ENCODE measurements at regions of chr9 and their contacts with region 1.

Region 1: GRCh38 chr9:116572095-116572748 is 114.9 kb upstream of the TRIM32 start:
- DNase-seq: no peak
- H3K4me3 ChIP-seq: no peak overlapping the region
- CTCF ChIP-seq: peak; percentile 98

Region 2: GRCh38 chr9:116015855-116016254 is 556.4 kb before region 1 on chr9:
- CTCF ChIA-PET with region 1: no interaction called
- POLR2A ChIA-PET with region 1: no interaction called
- DNase-seq: no peak
- H3K4me3 ChIP-seq: no peak overlapping the region
- CTCF ChIP-seq: no peak

Region 3: DNA sequence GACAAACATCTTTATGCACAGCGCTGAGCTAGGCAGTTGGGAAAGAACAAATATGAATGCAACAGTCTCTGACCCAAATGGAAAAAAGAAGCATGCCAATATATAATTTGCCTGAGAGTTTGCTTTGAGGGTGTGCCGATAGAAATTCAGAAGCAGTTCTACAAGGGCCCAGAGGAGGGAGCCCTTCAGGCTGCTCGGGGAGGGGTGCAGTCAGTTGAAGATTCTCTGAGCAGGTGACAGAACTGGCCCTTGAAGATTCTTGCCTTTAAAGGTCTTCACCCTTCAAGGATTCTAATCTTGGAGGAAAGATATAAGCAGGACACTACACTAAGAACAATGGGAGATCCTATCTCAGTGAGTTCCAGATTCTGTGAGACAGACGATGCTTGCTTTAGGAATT is 422.4 kb before region 1 on chr9:
- CTCF ChIA-PET with region 1: interaction called, 13 read pairs
- POLR2A ChIA-PET with region 1: no interaction called
- DNase-seq: no peak
- H3K4me3 ChIP-seq: no peak overlapping the region
- CTCF ChIP-seq: peak; percentile 39

Region 4: DNA sequence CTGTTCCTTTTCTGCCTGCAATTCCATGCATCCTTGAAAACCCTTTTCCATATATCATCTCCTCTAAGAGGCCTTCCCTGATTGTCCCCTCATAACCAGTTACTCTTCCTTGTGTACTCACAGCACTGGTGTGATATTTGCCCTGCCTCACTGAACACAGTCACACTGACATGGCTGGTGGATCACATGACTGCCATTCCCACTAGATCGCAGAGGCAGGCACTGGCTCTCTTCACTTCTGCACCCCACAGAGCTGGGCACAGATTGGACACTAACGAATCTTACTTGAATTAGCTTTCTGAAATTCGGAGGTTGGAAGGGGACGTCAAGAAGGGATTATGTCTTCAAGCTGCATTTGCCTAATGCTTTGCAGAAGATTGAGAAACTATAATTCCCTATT is 210.7 kb before region 1 on chr9:
- CTCF ChIA-PET with region 1: interaction called, 14 read pairs
- POLR2A ChIA-PET with region 1: no interaction called
- DNase-seq: no peak
- H3K4me3 ChIP-seq: no peak overlapping the region
- CTCF ChIP-seq: no peak

Region 5: GRCh38 chr9:116555119-116555518 is 17.1 kb before region 1 on chr9:
- CTCF ChIA-PET with region 1: interaction called, 15 read pairs
- POLR2A ChIA-PET with region 1: no interaction called
- DNase-seq: no peak
- H3K4me3 ChIP-seq: no peak overlapping the region
- CTCF ChIP-seq: no peak

Region 6: GRCh38 chr9:116646661-116647512 is 74.7 kb after region 1 on chr9:
- CTCF ChIA-PET with region 1: interaction called, 15 read pairs
- POLR2A ChIA-PET with region 1: no interaction called
- DNase-seq: no peak
- H3K4me3 ChIP-seq: no peak overlapping the region
- CTCF ChIP-seq: peak; percentile 62

Measured in AG04449 (cell line).